SK-N-SH (cell line): ENCODE measurements at regions of chr7 and their contacts with region 1.

Region 1: DNA sequence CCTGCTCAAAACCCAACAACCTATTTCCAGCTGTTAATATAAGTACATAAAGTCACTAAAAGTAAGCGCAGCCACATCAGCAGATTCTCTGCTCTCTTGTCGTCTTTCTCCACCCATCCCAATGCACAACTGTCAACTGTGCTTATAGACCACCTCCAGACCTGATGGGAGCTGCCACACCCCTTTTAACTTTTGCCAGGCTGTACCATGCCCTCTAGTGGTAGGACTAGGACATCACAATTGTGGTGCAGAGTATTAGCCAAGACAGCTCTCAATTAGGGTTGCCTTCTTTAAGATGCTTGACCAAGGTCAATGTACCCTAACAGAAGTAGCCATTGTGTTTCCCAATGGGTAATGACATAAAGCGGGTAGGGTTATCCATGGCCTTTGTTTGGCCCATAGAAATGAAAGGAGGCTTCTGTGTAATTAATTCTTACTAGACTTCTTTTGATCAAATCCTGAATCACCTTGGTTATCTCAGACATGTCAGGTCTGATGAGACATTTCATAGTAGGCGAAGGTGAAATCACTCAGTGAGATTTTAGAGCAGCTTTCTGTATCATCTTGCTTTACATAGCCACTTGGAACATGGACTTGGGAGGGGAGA is 68.1 kb downstream of the SCRN1 start:
- DNase-seq: peak; percentile 81
- H3K4me3 ChIP-seq: no peak overlapping the region; a peak in 1 of 4 replicates
- H3K27ac ChIP-seq: no peak overlapping the region
- H3K4me1 ChIP-seq: no peaks in the 10 kb centered on the region; a peak in 1 of 4 replicates
- H3K27me3 ChIP-seq: no peaks in the 10 kb centered on the region
- CTCF ChIP-seq: peak; percentile 99
- EP300 ChIP-seq: no peak
- RAD21 ChIP-seq: peak; percentile 99

Region 2: GRCh38 chr7:29748286-29749108 is 173.0 kb before region 1 on chr7:
- CTCF ChIA-PET with region 1: interaction called, 61 read pairs
- POLR2A ChIA-PET with region 1: interaction called, 3 read pairs
- DNase-seq: peak; percentile 24
- H3K4me3 ChIP-seq: no peak overlapping the region; a peak in 1 of 4 replicates
- H3K27ac ChIP-seq: no peak overlapping the region
- H3K4me1 ChIP-seq: no peaks in the 10 kb centered on the region
- H3K27me3 ChIP-seq: 0 out of 2 replicates have a peak, but pooled peaks cover 3% of the 10 kb centered on the region
- CTCF ChIP-seq: peak; percentile 83
- EP300 ChIP-seq: no peak
- RAD21 ChIP-seq: peak; percentile 82

Region 3: DNA sequence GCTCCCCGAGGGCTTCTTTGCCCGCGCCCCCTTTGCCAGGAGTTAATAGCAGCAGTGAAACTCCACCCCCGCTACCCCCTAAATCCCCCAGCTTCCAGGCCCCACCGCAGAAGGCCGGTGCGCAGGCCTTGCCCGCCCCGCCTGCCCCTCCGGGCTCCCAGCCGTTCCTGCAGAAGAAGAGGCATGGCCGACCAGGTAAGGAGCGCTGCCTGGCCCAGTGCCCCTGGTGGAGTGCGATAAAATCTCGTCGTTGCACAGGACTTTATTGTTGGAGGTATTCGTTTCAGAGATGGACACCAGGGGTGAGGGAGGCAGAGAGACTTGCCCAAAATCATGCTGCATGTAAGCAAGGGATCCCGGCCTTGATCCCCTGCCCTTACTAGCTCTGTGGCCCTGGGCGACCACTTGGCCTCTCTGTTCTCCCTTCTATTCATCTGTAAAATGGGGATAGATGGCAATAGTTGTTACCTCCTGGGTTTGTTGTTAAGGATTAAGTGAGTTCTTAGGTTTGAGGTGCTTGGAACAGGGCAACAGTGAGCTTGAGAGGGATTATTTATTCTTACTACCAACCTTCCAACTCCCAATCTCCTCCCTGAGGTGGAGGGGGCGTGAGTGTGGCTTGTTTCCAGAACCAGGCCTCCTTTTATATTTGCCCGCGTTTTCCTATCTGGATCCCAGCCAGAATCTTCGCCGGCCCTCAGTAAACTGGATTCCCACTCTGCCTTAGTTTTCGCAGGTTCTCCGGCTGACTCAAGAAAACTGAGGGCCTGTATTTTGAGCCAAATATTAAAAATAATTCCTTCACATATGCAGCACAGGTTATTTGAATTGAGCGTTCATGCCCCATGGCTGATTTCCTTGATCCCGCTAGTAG is 36.9 kb before region 1 on chr7:
- CTCF ChIA-PET with region 1: interaction called, 365 read pairs
- POLR2A ChIA-PET with region 1: interaction called, 3 read pairs
- DNase-seq: peak; percentile 47
- H3K4me3 ChIP-seq: no peak overlapping the region
- H3K27ac ChIP-seq: no peak overlapping the region
- H3K4me1 ChIP-seq: no peaks in the 10 kb centered on the region; a peak in 1 of 4 replicates
- H3K27me3 ChIP-seq: no peaks in the 10 kb centered on the region
- CTCF ChIP-seq: no peak
- EP300 ChIP-seq: no peak
- RAD21 ChIP-seq: no peak

Region 4: DNA sequence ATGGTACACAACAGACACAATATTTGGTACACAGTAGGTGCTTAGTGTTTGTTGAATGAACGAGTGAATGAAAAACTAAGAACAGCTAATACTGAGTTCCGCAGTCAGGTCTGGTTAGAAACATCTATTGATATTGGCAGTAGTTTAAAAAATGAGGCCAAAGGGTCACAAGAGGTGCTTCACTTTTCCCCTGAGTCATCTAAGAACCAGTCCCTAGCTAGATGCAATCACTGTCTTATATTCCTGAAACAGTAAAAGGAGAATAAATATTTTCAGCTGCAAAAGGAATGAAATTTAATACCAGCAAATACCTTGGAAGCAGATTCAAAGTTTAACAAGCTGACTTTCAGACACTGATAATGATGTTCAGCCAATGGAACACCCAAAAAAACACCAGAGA is 13.6 kb after region 1 on chr7:
- CTCF ChIA-PET with region 1: interaction called, 72 read pairs
- POLR2A ChIA-PET with region 1: no interaction called
- DNase-seq: no peak
- H3K4me3 ChIP-seq: no peak overlapping the region
- H3K27ac ChIP-seq: peak overlapping the region in 1 of 2 experiments; percentile 23; a peak in 1 of 4 replicates
- H3K4me1 ChIP-seq: 0 out of 4 replicates have a peak, but pooled peaks cover 0 to 10% of the 10 kb centered on the region in 2 experiments
- H3K27me3 ChIP-seq: no peaks in the 10 kb centered on the region
- CTCF ChIP-seq: no peak
- EP300 ChIP-seq: peak in 1 of 2 experiments; percentile 33; a peak in 1 of 4 replicates
- RAD21 ChIP-seq: no peak

Region 5: DNA sequence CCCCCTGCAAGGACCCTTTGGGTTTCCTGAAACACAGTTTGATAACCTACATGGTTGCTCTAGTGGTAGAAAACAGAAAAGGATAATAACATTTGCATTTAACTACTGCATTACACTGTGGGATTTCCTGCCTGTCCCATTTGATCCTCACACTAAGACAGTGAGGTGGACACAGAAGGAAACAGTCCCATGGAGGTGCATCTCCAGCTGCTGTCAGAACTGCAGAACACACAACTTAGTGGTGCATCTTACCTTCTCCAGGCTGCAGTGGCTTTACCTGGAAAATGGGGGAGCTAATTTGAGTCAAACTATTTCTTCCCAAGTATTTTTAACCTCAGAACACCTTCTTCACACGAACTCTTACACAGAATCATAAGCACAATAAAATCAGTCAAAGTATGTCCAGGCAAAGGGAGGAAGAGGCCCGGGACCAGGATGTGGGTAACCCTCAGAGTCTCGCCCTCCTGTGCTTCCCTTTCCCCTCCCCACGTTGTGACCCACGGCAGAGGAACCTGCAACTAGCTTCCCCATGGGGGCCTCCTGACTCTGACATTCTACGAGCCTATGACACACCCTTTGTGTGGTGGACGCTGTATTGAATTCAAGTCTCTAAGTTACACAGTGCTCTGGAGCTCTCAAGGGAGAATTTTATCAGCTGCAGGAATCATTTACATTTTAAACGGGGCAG is 34.4 kb after region 1 on chr7:
- CTCF ChIA-PET with region 1: interaction called, 23 read pairs
- POLR2A ChIA-PET with region 1: no interaction called
- DNase-seq: no peak
- H3K4me3 ChIP-seq: no peak overlapping the region
- H3K27ac ChIP-seq: no peak overlapping the region
- H3K4me1 ChIP-seq: peaks cover 0 to 13% of the 10 kb centered on the region in 2 experiments; a peak in 1 of 4 replicates
- H3K27me3 ChIP-seq: no peaks in the 10 kb centered on the region
- CTCF ChIP-seq: no peak
- EP300 ChIP-seq: no peak
- RAD21 ChIP-seq: no peak

Region 6: DNA sequence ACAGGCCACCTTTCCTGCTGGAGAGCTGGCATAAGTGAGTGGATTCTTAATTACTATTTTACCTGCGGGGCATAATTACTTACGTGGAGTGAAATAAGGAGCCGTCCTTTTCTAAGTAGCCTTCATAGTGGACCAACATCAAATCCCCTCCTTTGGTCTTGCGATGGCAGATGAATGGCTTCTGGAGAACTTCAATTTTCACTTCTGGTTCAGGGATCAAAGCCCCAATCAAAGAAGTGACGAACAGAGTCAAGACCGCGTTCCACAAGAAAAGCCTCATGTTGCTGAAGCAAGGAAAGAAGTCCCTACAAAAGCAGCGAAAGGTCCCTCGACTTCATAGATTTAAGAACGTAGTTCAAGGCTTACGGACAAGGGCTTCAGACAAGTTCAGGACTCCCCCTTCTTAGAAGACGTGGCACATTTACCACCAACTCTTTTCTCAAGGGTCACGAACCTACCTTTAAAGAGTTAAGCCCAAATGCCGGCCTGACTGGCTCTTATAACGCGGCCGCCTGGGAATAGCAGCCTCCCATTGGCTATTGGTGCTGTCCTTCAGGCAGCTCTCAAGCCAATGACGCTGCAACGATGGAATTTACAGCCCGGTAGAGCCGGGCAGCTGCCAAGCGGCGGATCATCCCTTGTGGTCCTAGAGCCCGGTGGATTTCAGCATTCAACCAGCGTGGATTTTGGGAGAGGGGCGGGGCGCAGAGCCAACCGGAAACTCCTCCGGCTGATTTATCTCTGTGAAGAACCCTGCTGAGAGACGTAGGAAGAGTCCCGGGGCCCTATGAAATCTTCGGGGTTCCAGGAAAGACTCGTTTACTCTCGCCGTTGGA is 104.9 kb after region 1 on chr7 and contains the start of gene FKBP14:
- CTCF ChIA-PET with region 1: interaction called, 12 read pairs
- POLR2A ChIA-PET with region 1: no interaction called
- DNase-seq: peak; percentile 95
- H3K4me3 ChIP-seq: peak within 1 kb of the TSS; percentile 75 to 99
- H3K27ac ChIP-seq: peak within 1 kb of the TSS; percentile 79 to 96
- H3K4me1 ChIP-seq: peaks cover 8 to 34% of the 10 kb centered on the region in 2 experiments
- H3K27me3 ChIP-seq: no peaks in the 10 kb centered on the region
- CTCF ChIP-seq: no peak
- EP300 ChIP-seq: peak in 1 of 2 experiments; percentile 34; a peak in 1 of 4 replicates
- RAD21 ChIP-seq: 0 out of 2 replicates have a peak, but pooled peaks have one; percentile 2
- polyA plus RNA-seq, gene FKBP14: 15.7 and 24.4 TPM in 2 replicates